ENCODE measurements at regions of chr13 and their contacts with region 1.

Region 1: DNA sequence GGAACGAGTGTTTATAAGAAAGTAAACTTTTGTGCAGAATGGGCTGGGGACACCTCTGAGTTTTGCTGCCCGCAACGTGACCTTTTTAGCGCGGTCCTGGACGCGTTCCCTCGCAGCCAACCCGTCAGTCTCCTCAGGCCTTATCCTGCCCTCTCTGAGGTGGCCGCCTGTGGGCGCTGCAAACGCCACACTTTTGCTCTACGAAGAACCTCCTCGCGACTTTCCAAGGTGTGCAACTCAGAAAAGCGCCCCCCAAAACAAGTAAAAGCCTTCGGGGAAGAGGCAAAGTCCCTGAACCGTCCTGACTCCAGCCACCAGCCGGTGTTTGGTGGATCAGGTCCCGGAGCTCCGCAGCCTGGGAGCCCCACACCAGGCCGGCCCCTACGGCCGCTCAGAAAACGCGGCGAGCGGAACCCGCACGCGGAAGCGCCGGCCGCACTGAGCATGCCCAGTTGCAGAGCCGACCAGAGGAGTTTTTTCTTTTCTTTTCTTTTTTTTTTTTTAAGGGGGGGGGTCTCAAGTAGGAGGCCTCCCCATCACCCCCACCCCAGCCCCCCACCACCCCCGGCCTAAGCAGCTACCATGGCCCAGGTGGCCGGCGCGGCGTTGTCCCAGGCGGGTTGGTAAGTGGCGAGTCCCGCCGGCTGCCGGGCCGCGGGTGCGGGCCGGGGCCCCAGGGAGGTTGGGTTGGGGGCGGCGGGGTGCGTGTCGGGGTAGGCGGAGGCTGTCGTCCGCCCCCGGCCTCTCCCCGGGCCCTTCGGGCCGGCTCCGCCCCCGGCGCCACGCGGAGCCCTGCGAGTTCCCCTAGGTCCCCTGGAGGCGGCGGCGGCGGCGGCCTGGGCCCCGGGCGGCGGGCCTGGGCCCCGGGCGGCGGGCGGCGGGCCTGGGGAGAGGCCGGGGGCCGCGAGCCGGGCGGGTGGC is at the start of gene TDRD3:
- DNase-seq: peak; percentile 88
- H3K4me3 ChIP-seq: peak within 1 kb of the TSS; percentile 77
- H3K27ac ChIP-seq: peak within 1 kb of the TSS; percentile 82
- H3K4me1 ChIP-seq: peaks cover 24% of the 10 kb centered on the region
- CTCF ChIP-seq: peak; percentile 84
- total RNA-seq, gene TDRD3: 12.2 and 13.5 TPM in 2 replicates

Region 2: DNA sequence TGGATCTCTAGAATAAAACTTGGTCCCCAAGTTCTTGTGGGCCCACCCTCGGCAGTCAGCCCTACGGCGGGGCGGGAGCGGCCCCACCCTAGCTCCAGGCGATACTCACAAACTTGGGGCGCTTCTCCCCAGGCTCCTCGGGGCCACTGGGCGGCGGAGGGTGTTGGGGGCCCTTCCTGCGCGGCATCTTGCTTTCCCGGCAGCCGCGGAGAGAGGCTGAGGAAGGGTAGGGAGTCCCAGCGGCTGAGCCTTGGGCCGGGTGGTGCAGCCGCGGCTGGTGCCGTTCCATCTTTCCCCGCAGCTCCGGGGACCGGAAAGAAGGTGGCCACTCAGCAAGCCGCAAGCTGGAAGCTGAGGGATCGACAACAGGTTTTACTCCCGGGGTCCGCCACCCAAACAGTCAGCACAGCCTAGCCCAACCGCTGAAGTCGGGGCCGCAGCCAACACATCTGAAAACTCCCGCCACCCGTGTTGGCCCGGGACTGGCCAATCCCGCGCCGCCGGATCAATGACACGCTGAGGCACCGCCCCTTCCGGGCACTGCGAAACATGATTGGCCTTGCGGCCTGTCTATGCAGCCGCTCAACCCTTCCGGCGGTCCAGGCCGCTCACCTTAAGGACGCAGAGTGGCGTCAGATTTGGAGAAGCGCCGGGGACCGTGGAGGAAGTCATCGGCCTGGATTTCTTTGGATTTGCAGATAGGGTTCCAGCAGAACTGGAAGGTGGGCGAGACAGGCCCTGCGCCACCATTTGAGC is 233.4 kb before region 1 on chr13 and contains the start of gene DIAPH3:
- CTCF ChIA-PET with region 1: no interaction called
- POLR2A ChIA-PET with region 1: interaction called, 16 read pairs
- intact Hi-C with region 1: loop called (anchors 1 kb)
- DNase-seq: peak; percentile 96
- H3K4me3 ChIP-seq: peak within 1 kb of the TSS; percentile 83
- H3K27ac ChIP-seq: peak within 1 kb of the TSS; percentile 79
- H3K4me1 ChIP-seq: peaks cover 16% of the 10 kb centered on the region
- CTCF ChIP-seq: no peak
- total RNA-seq, gene DIAPH3: 28.3 and 33.5 TPM in 2 replicates

Measured in OCI-LY7 (cell line).